ENCODE measurements at regions of chr5 and their contacts with region 1.

Region 1: DNA sequence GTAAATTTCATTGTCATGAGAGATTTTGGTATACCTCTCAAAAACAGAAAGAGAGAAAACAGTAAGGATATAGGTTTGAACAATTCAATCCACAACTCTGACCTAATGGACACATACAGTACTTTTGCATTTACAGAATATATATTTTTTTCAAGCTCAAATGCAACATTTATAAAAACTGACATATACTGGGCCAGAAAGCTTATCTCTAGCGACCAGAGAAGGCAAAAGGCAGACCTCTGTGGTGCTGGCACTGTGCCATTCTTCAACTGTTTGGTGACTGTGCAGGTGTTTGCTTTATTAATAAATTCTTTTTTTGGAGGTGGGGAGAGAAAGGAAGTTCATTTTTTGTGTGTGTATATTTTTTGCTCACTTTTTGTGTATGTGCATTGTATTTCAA is 6.0 kb upstream of the PLAC8L1 start:
- DNase-seq: no peak
- H3K4me3 ChIP-seq: no peak overlapping the region
- H3K27ac ChIP-seq: no peak overlapping the region
- H3K4me1 ChIP-seq: no peaks in the 10 kb centered on the region
- H3K27me3 ChIP-seq: no peaks in the 10 kb centered on the region
- CTCF ChIP-seq: no peak

Region 2: DNA sequence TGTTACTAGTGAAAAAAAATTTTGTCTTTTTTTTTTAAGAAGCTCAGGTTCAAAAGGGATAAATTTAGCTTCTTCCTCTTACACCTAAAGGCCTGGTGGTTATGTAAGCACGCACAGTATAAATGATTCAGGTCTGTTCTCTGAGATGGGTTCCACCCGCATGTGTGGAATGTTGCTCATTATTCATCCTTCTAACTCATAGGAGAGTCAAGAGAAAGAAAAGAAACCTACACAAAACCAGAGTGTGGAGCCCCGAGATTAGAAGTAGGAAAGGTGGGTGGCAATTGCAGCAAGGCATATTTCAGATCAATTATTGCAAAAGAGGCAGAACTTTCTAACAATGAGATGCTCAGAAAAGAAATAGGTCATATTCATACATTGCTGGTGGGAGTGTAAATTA is 19.5 kb before region 1 on chr5:
- CTCF ChIA-PET with region 1: no interaction called
- POLR2A ChIA-PET with region 1: interaction called, 11 read pairs
- intact Hi-C with region 1: no loop called
- DNase-seq: no peak
- H3K4me3 ChIP-seq: no peak overlapping the region
- H3K27ac ChIP-seq: no peak overlapping the region
- H3K4me1 ChIP-seq: peaks cover 8% of the 10 kb centered on the region; the same call in 1 of the 2 replicates
- H3K27me3 ChIP-seq: no peaks in the 10 kb centered on the region
- CTCF ChIP-seq: no peak

Measured in PC-9 (cell line).